Activated CD4-positive, alpha-beta memory T cell treated with anti-CD3 and anti-CD28 coated beads for 36 hours (primary cell): ENCODE measurements at regions of chr1 and their contacts with region 1.

Region 1: DNA sequence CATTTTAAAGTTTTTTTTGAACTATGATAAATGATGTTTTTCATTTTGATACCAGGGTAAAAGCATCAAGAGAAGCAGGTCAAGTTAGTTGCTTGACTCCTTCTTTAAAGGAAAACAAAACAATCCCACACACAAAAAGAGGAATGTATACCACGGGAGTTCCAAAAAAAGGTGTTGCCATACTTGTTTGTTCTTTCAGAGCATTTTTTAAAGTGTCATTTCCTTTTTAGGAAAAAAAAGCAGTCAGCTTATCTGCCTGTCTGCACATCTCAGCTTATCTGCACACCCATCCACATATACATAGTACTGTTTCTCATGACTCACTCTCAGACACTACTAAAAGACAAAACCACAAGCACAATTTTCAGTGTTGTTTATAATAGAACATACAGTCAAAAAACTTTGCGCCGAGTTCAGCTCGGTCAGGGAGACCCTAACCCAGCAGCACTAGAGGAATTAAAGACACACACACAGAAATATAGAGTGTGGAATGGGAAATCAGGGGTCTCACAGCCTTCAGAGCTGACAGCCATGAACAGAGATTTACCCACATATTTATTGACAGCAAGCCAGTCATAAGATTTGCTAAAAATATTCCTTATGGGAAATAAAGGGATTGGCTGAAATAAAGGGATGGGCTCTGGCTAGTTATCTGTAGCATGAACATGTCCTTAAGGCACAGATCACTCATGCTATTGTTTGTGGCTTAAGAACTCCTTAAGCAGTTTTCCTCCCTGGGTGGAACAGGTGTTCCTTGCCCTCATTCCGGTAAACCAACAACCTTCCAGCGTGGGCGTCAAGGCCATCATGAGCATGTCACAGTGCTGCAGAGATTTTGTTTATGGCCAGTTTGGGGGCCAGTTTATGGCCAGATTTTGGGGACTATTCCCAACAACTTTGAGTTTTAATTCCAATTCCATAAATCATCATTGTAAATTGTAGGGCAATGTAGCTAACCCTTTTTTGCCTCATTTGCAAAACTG is 11.4 kb upstream of the MNDA start:
- DNase-seq: peak; percentile 40
- H3K4me3 Mint-ChIP-seq: peak overlapping the region; percentile 46
- H3K27ac Mint-ChIP-seq: peak overlapping the region; percentile 71
- H3K4me1 Mint-ChIP-seq: peaks cover 22% of the 10 kb centered on the region
- H3K27me3 Mint-ChIP-seq: peaks cover 2% of the 10 kb centered on the region

Region 2: GRCh38 chr1:158830904-158831507 is 11.3 kb after region 1 on chr1 and contains the start of gene MNDA:
- CTCF ChIA-PET with region 1: interaction called, 12 read pairs
- POLR2A ChIA-PET with region 1: interaction called, 11 read pairs
- intact Hi-C with region 1: no loop called
- DNase-seq: no peak
- H3K4me3 Mint-ChIP-seq: no peak within 1 kb of the TSS
- H3K27ac Mint-ChIP-seq: no peak within 1 kb of the TSS
- H3K4me1 Mint-ChIP-seq: peaks cover 18% of the 10 kb centered on the region
- H3K27me3 Mint-ChIP-seq: no peaks in the 10 kb centered on the region
- total RNA-seq, gene MNDA: not detected

Region 3: GRCh38 chr1:158898722-158899121 is 79.0 kb after region 1 on chr1:
- CTCF ChIA-PET with region 1: no interaction called
- POLR2A ChIA-PET with region 1: no interaction called
- intact Hi-C with region 1: no loop called
- DNase-seq: no peak
- H3K4me3 Mint-ChIP-seq: no peak overlapping the region
- H3K27ac Mint-ChIP-seq: no peak overlapping the region
- H3K4me1 Mint-ChIP-seq: peaks cover 12% of the 10 kb centered on the region
- H3K27me3 Mint-ChIP-seq: peaks cover 2% of the 10 kb centered on the region